Activated B cell treated with CpG ODN at 0.5 μM for 24 hours (primary cell): ENCODE measurements at regions of chr17 and their contacts with region 1.

Region 1: GRCh38 chr17:1179818-1180742 is at the start of gene ABR:
- DNase-seq: peak; percentile 55
- ATAC-seq: peak; percentile 5
- H3K4me3 Mint-ChIP-seq: peak within 1 kb of the TSS; percentile 72
- H3K27ac Mint-ChIP-seq: no peak within 1 kb of the TSS
- H3K4me1 Mint-ChIP-seq: peaks cover 54% of the 10 kb centered on the region
- H3K27me3 Mint-ChIP-seq: no peaks in the 10 kb centered on the region
- CTCF ChIP-seq: no peak
- total RNA-seq, gene ABR: 132 and 150 TPM in 2 replicates

Region 2: DNA sequence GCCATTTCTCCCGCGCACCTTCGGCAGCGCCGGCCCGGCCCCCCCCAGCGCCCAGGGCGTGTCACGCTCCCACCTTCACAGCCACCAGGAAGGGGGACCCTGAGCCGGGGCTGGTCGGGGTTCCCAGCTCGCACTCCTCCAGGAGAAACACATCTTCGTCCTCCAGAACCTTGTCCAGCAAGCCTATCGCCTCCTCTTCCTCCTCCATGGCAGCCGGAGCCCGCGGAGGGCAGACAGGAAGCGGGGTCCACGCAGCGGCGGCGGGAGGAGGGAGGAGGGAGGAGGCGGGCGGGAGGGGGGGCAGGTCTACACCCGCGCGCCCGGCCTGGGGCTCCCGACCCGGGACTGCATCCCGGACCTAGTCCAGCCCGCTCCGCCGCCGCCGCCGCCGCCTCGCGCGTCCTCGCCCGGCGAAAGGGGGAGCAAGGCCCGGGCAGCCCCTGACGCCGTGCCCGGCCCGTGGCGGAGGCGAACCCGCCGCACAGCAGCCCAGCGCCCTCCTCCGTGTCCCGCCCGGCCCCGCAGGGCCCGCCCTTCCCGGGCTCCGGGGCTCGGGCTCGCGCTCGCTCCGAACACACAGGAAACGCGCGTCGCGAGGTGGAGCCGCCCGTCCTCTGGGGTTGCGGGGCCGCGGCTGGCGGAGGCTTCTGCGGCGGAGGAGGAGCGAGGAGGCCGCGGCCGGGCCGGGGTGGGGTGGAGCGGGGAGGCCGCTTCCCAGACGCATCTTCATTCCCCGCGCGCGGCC is 71.0 kb before region 1 on chr17:
- CTCF ChIA-PET with region 1: no interaction called
- POLR2A ChIA-PET with region 1: no interaction called
- intact Hi-C with region 1: loop called (anchors 5 kb)
- DNase-seq: peak; percentile 49
- ATAC-seq: peak; percentile 68
- H3K4me3 Mint-ChIP-seq: peak overlapping the region; percentile 84
- H3K27ac Mint-ChIP-seq: no peak overlapping the region
- H3K4me1 Mint-ChIP-seq: peaks cover 33% of the 10 kb centered on the region
- H3K27me3 Mint-ChIP-seq: no peaks in the 10 kb centered on the region
- CTCF ChIP-seq: no peak

Region 3: DNA sequence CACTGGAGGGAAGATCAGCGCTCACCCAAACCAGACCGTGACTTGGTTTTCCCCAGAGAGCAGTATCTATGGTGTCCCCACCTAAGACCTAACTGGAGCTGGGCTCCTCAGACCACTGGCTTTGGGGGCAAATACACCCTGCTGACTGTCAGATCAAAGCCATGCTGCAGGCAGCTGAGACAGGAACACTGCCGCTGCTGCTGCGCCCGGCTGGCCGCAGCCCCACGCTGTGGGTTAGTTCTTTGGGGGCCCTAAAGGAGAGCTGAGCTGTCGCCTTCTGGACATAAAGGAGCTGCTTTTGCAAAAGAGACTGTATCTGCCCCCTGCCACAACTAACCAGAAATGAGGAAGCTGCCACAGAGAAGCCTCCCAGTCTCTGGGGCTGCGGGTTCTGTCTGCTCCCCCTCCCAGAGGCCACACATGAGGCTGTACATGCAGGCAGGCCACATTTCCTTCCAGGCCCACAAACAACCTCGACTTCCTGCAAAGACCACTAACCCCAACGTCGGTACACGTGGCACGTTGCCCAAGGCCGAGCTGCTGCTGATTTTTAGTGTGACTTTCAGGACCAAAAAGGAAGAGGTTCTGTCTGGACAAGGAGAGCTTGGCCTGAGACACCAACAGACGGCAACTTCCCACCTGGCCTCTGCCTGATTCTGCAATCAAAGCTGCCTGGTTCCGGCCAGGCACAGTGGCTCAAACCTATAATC is 17.9 kb after region 1 on chr17:
- CTCF ChIA-PET with region 1: interaction called, 7 read pairs
- POLR2A ChIA-PET with region 1: interaction called, 35 read pairs
- intact Hi-C with region 1: loop called (anchors 1 kb)
- DNase-seq: peak; percentile 58
- ATAC-seq: peak; percentile 87
- H3K4me3 Mint-ChIP-seq: peak overlapping the region; percentile 63
- H3K27ac Mint-ChIP-seq: peak overlapping the region; percentile 80
- H3K4me1 Mint-ChIP-seq: peaks cover 69% of the 10 kb centered on the region
- H3K27me3 Mint-ChIP-seq: no peaks in the 10 kb centered on the region
- CTCF ChIP-seq: no peak

Region 4: DNA sequence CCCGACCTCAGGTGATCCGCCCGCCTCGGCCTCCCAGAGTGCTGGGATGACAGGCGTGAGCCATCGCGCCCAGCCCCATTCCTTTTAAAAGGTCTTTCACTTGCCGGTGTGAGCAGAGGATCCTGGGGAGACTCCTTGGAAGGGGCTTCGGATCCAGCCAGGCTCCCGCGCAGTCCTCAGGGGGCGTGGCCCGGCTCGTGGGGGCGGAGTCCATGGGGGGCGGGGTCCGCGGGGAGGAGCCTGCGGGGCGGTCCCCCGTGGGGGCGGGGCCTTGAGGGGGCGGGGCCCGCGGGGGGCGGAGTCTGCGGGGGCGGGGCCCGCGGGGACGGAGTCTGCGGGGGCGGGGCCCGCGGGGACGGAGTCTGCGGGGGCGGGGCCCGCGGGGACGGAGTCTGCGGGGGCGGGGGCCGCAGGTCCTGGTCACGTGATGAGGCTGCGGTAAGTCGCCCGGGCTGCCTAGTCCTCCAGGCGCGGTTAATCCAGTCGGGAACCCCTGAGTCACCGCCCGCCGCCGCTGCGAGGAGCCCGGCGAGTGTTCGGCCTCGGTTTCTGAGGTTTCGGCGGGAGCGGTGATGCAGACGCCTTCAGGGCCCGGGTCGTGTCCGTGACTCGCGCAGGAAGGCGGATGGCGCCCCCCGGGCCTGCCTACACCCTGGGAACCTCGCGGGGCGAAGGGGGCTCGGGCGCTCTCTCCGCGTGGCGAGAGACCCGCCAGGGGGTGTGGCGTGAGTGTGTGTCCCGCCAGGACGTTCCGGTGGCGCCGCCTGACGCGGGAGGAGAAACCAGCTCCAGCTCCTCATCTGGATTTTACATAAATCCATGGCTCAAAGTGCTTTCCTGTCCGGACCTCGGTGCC is 23.3 kb after region 1 on chr17:
- CTCF ChIA-PET with region 1: interaction called, 7 read pairs
- POLR2A ChIA-PET with region 1: interaction called, 35 read pairs
- intact Hi-C with region 1: loop called (anchors 1 kb)
- DNase-seq: peak; percentile 44
- ATAC-seq: peak; percentile 56
- H3K4me3 Mint-ChIP-seq: no peak overlapping the region
- H3K27ac Mint-ChIP-seq: no peak overlapping the region
- H3K4me1 Mint-ChIP-seq: peaks cover 56% of the 10 kb centered on the region
- H3K27me3 Mint-ChIP-seq: no peaks in the 10 kb centered on the region
- CTCF ChIP-seq: no peak